Right cardiac atrium (tissue), 5 donors: ENCODE measurements at regions of chr4 and their contacts with region 1.

Region 1: GRCh38 chr4:15396157-15396800 is 31.6 kb upstream of the C1QTNF7 start:
- DNase-seq: peak in 1 of 3 donors; percentile 58
- ATAC-seq: peak; percentile 13 to 56
- H3K4me3 ChIP-seq: no peak overlapping the region
- H3K27ac ChIP-seq: no peak overlapping the region
- H3K4me1 ChIP-seq: peaks cover 3% of the 10 kb centered on the region
- H3K27me3 ChIP-seq: no peaks in the 10 kb centered on the region

Region 2: GRCh38 chr4:15231265-15232091 is 164.8 kb before region 1 on chr4:
- intact Hi-C with region 1: loop called in 3 of 4 experiments (anchors 5 to 10 kb)
- DNase-seq: peak; percentile 77 to 82 (median 81)
- ATAC-seq: peak; percentile 87 to 90
- H3K4me3 ChIP-seq: no peak overlapping the region
- H3K27ac ChIP-seq: no peak overlapping the region
- H3K4me1 ChIP-seq: no peaks in the 10 kb centered on the region
- H3K27me3 ChIP-seq: no peaks in the 10 kb centered on the region